Activated B cell treated with CpG ODN at 0.5 μM for 24 hours (primary cell): ENCODE measurements at regions of chr10 and their contacts with region 1.

Region 1: GRCh38 chr10:42552493-42553407 is 85.6 kb downstream of the ZNF33B start:
- DNase-seq: peak; percentile 85
- ATAC-seq: peak; percentile 97
- H3K4me3 Mint-ChIP-seq: peak overlapping the region; percentile 96
- H3K27ac Mint-ChIP-seq: peak overlapping the region; percentile 89
- H3K4me1 Mint-ChIP-seq: peaks cover 35% of the 10 kb centered on the region
- H3K27me3 Mint-ChIP-seq: no peaks in the 10 kb centered on the region
- CTCF ChIP-seq: no peak

Region 2: GRCh38 chr10:42367532-42368230 is 185.1 kb before region 1 on chr10:
- CTCF ChIA-PET with region 1: no interaction called
- POLR2A ChIA-PET with region 1: no interaction called
- intact Hi-C with region 1: loop called (anchors 1 kb)
- DNase-seq: peak; percentile 41
- ATAC-seq: peak; percentile 99
- H3K4me3 Mint-ChIP-seq: peak overlapping the region; percentile 87
- H3K27ac Mint-ChIP-seq: peak overlapping the region; percentile 61
- H3K4me1 Mint-ChIP-seq: peaks cover 4% of the 10 kb centered on the region
- H3K27me3 Mint-ChIP-seq: no peaks in the 10 kb centered on the region
- CTCF ChIP-seq: no peak

Region 3: GRCh38 chr10:42583828-42584227 is 31.1 kb after region 1 on chr10:
- CTCF ChIA-PET with region 1: no interaction called
- POLR2A ChIA-PET with region 1: no interaction called
- intact Hi-C with region 1: no loop called
- DNase-seq: no peak
- ATAC-seq: no peak
- H3K4me3 Mint-ChIP-seq: no peak overlapping the region
- H3K27ac Mint-ChIP-seq: no peak overlapping the region
- H3K4me1 Mint-ChIP-seq: no peaks in the 10 kb centered on the region
- H3K27me3 Mint-ChIP-seq: no peaks in the 10 kb centered on the region
- CTCF ChIP-seq: no peak

Region 4: GRCh38 chr10:42932735-42933447 is 380.1 kb after region 1 on chr10:
- CTCF ChIA-PET with region 1: no interaction called
- POLR2A ChIA-PET with region 1: no interaction called
- intact Hi-C with region 1: no loop called
- DNase-seq: no peak
- ATAC-seq: no peak
- H3K4me3 Mint-ChIP-seq: peak overlapping the region; percentile 55
- H3K27ac Mint-ChIP-seq: no peak overlapping the region
- H3K4me1 Mint-ChIP-seq: peaks cover 10% of the 10 kb centered on the region
- H3K27me3 Mint-ChIP-seq: peaks cover 40% of the 10 kb centered on the region
- CTCF ChIP-seq: no peak

Region 5: GRCh38 chr10:43361986-43362839 is 809.5 kb after region 1 on chr10:
- CTCF ChIA-PET with region 1: no interaction called
- POLR2A ChIA-PET with region 1: no interaction called
- intact Hi-C with region 1: loop called (anchors 1 kb)
- DNase-seq: peak; percentile 86
- ATAC-seq: peak; percentile 98
- H3K4me3 Mint-ChIP-seq: peak overlapping the region; percentile 97
- H3K27ac Mint-ChIP-seq: peak overlapping the region; percentile 93
- H3K4me1 Mint-ChIP-seq: peaks cover 23% of the 10 kb centered on the region
- H3K27me3 Mint-ChIP-seq: no peaks in the 10 kb centered on the region
- CTCF ChIP-seq: no peak

Region 6: DNA sequence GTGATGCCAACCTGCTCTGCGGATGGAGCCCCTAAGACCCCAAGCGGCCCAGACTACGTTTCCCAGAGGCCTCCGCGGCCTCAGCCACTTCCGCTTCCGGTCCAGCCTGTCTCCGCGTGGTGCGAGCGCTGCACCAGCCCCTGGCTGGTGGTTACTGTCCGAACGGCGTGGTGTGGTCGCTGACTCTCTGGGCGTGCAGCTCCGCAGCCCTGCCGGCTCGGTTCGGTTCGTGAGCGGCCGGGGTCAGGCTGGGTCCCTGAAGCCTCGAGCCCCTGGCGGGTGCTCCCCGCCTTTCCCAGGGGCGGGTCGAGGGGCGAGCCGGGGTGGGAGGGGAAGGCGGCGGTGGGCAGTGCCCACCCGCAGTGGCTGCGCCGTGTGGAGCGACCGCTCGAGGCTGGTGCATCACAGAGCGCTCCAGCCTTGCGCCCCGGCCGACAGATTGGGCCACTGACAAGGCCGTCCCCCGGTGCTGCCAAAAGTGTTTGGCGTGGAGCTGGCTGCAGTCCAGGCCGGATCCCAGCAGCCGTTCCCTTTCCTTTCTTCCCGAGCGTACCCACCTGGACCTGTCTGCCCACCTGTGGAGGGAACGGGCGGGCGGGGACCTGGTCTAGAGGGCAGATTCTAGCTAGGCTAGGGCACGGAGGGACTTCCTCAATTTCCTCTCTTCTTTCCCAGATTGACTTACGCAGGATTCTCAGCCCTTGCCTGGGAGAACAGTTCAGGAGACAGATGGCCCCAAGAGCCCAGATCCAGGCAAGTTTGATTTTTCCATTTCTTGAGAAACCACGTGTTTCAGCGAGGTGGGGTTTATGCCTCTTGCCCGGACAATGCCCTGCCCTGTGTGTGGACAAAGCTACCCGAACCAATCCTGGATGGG is 1053.8 kb after region 1 on chr10 and contains the start of gene ZNF485:
- CTCF ChIA-PET with region 1: no interaction called
- POLR2A ChIA-PET with region 1: no interaction called
- intact Hi-C with region 1: loop called (anchors 1 kb)
- DNase-seq: peak; percentile 66
- ATAC-seq: peak; percentile 95
- H3K4me3 Mint-ChIP-seq: peak within 1 kb of the TSS; percentile 84
- H3K27ac Mint-ChIP-seq: peak within 1 kb of the TSS; percentile 43
- H3K4me1 Mint-ChIP-seq: peaks cover 20% of the 10 kb centered on the region
- H3K27me3 Mint-ChIP-seq: no peaks in the 10 kb centered on the region
- CTCF ChIP-seq: no peak
- total RNA-seq, gene ZNF485: 7.6 and 9.0 TPM in 2 replicates